ENCODE measurements at regions of chr10 and their contacts with region 1.

Region 1: GRCh38 chr10:14588084-14588937 is 186.4 kb downstream of the FAM107B start:
- DNase-seq: peak; percentile 50
- H3K4me3 Mint-ChIP-seq: peak overlapping the region; percentile 60
- H3K27ac Mint-ChIP-seq: peak overlapping the region; percentile 90
- H3K4me1 Mint-ChIP-seq: peaks cover 81% of the 10 kb centered on the region
- H3K27me3 Mint-ChIP-seq: no peaks in the 10 kb centered on the region

Region 2: GRCh38 chr10:14553448-14553847 is 34.9 kb before region 1 on chr10:
- intact Hi-C with region 1: loop called (anchors 5 kb)
- DNase-seq: no peak
- H3K4me3 Mint-ChIP-seq: no peak overlapping the region
- H3K27ac Mint-ChIP-seq: peak overlapping the region; percentile 68
- H3K4me1 Mint-ChIP-seq: peaks cover 67% of the 10 kb centered on the region
- H3K27me3 Mint-ChIP-seq: no peaks in the 10 kb centered on the region

Region 3: DNA sequence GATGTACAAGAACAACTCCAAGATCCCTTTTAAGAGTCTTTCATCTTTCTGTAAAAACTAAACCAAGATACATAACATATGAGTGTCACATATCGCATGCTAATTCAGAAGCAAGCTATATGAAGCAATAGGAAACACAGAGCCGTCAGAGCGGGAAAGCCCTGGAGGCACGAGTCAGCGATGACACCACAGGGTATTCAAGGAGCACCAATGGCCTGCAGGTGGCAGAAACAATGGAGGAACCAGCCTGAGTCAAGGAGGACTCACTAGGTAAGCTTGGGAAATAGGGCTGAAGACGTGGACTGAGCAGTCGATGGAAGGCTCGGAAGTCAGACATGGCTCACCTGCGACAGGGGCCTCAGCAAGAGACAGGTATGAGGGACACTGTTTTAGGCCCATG is 28.0 kb before region 1 on chr10:
- intact Hi-C with region 1: loop called (anchors 2 kb)
- DNase-seq: peak; percentile 52
- H3K4me3 Mint-ChIP-seq: peak overlapping the region; percentile 38
- H3K27ac Mint-ChIP-seq: peak overlapping the region; percentile 84
- H3K4me1 Mint-ChIP-seq: peaks cover 83% of the 10 kb centered on the region
- H3K27me3 Mint-ChIP-seq: no peaks in the 10 kb centered on the region

Region 4: DNA sequence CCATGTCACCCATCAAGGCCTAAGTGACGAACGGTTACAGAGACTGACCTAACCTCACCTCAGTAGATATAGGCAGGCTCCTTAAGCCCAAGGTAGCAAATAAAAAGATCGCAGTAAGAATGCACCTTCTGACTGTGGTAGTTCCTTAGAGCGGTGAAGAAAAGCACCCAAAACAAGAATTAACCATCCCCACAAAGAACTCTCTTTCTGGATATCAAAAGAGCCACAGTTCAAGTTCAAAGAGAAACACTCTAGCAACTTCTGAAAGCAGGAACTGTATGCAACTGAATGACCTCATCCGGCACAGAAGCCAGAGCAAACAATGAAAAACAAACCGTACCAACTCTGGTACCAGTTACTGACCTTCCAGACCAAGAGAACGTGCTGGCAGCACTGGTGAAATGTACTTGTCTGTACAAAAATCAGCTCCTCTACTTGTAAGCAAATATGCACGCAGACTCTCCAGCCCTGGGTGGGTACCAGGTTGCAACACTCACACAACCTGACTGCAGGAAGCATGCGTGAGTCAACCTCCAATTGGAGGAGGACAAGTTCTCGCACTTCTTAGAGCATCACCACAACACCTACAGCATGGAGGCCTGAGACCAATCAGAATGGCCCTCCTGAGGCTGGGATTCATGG is 16.3 kb before region 1 on chr10:
- intact Hi-C with region 1: loop called (anchors 1 kb)
- DNase-seq: peak; percentile 55
- H3K4me3 Mint-ChIP-seq: peak overlapping the region; percentile 73
- H3K27ac Mint-ChIP-seq: peak overlapping the region; percentile 91
- H3K4me1 Mint-ChIP-seq: peaks cover 73% of the 10 kb centered on the region
- H3K27me3 Mint-ChIP-seq: no peaks in the 10 kb centered on the region

Region 5: GRCh38 chr10:14822879-14823755 is 234.8 kb after region 1 on chr10:
- intact Hi-C with region 1: loop called (anchors 5 kb)
- DNase-seq: no peak
- H3K4me3 Mint-ChIP-seq: no peak overlapping the region
- H3K27ac Mint-ChIP-seq: no peak overlapping the region
- H3K4me1 Mint-ChIP-seq: peaks cover 17% of the 10 kb centered on the region
- H3K27me3 Mint-ChIP-seq: peaks cover 18% of the 10 kb centered on the region

Measured in activated T-helper 2 cell treated with anti-CD3 and anti-CD28 coated beads, Interferon-gamma antibody, Interleukin-2, Interleukin-4, amounts not matched to agents 10 μg/mL and 5 μg/mL and 100 μg/mL, durations not matched to agents 14 hours and 24 hours and 36 hours (primary cell).